ENCODE measurements at regions of chr5 and their contacts with region 1.

Region 1: DNA sequence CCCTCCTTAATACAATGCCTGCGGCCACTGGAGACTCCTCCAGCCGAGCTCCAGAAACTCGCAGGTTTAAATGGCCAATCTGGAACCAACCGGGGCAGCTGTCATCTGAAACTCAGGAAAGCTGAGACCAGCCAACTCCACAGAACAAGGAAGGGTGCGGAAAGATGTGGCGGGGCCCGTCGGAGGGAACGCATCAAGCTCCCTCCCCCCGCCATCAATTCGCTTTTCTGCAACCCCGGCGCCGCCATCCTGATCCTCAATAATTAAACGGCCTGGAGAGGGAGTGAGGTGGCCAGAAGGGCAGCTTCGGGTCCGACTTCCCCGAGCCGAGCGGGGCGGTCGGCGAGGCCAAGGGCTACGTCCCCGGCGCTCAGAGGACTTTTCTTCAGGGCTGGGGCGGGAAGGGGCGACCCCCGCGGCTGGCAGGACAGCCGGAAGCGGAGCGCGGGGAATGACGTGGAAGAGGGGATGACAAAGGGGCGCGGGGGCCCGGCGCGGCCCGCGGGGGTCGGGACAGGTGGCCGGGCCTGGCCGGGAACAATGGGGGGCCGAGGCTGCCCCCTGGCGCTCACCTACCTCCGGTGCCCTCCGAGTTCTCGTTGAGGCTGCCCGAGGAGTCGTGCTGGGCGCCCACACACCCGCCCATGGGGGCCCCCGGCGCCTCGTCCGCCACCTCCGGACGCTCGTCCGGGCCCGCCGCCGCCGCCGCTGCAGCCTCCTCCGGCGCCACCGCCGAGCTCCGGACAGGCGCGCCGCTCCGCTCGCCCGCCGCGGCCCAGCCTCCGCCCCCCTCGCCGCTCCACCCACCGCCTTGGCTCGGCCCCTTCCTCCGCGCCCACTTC is at the start of gene UBTD2:
- DNase-seq: peak; percentile 92 to 94
- ATAC-seq: peak; percentile 89
- H3K4me3 ChIP-seq: peak within 1 kb of the TSS; percentile 91 to 93
- H3K27ac ChIP-seq: peak within 1 kb of the TSS; percentile 72 to 93
- H3K4me1 ChIP-seq: no peaks in the 10 kb centered on the region
- H3K27me3 ChIP-seq: no peaks in the 10 kb centered on the region
- total RNA-seq, gene UBTD2: 17.0 to 21.1 TPM

Region 2: DNA sequence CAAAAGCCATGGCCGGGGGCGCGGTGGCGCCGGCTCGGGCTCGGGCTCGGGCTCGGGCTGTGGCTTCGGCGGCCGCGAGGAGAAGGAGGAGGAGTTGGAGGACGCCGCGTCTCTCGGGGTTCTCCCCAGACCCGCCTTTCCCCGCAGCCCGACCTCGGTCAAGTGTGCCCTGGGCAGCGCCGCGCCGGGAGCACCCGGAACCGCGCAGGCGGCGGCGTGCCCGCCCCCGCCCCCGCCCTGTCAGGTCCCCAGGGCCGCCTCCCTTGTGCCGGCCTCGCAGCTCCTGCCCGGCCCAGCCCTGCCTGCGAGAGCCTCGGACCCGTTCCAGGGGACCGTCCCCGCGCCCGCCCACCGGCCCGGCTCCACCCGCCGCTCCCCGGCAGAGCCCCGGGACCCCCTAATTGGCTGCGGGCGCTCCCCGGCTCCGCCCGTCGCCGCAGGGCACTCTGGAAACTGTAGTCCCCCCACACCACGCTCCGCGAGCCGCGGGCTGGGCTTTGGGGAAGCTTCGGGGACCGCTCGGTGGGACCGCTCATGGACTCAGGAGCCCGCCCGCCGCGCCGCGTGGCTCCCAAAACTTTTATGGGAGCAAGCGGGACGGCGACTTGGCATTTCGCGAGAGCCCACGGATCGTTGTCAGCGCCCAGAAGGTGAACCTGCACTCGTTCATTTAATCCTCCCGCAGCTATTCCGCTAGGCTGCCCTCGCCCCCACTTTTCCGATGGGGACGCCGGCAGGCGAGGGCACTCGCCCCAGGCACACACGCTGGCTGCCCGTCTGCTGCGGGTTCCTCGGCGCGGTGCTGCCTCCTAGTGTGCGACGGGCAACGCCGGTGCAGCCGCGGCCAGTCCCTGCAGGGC is 95.0 kb before region 1 on chr5 and contains the start of gene STK10:
- intact Hi-C with region 1: loop called in 1 of 2 experiments (anchors 5 kb)
- DNase-seq: peak; percentile 97 to 98
- ATAC-seq: peak; percentile 97
- H3K4me3 ChIP-seq: peak within 1 kb of the TSS; percentile 43 to 64
- H3K27ac ChIP-seq: peak within 1 kb of the TSS in 1 of 2 donors; percentile 14
- H3K4me1 ChIP-seq: no peaks in the 10 kb centered on the region
- H3K27me3 ChIP-seq: no peaks in the 10 kb centered on the region
- total RNA-seq, gene STK10: 32.5 to 67.7 TPM

Measured in aorta (tissue), 5 donors.